Activated CD4-positive, alpha-beta T cell treated with anti-CD3 and anti-CD28 coated beads for 36 hours (primary cell): ENCODE measurements at regions of chr10 and their contacts with region 1.

Region 1: DNA sequence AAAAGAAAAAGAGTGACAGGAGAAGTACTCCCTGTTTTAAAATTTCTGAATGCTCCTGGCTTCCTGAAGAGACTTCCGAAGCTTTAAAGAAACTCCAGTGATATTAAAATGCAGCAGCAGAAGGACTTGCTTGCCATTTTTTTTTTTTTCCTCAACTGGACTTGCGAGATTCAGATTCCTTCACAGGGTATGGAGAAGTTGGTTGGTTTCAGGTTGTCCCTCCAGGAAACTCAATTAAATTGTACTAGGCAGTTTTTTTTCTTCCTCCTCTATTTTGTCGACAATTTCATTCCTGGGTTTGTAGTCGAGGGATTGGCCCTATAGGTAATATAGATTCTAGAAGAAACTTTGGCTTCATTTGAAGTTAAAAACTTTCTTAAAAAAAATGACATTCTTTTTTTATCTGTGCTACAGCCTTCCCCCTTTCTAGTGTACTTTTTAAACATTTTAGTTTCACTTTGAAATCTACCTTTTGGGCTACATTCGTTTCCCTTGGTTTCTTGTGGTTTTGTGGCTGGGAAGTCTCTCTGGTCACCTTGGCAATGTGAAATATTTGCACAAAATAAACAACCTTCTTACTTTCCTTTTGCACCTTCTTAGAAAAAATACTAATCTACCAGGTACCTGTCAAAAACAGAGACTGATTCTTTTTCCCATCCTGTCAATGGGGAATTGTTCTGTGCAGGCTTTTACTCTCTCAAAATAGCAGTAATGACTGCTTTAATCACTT is 350.1 kb downstream of the GATA3 start:
- DNase-seq: peak; percentile 49
- ATAC-seq: peak; percentile 10
- H3K4me3 Mint-ChIP-seq: peak overlapping the region; percentile 55
- H3K27ac Mint-ChIP-seq: peak overlapping the region; percentile 73
- H3K4me1 Mint-ChIP-seq: peaks cover 69% of the 10 kb centered on the region
- H3K27me3 Mint-ChIP-seq: no peaks in the 10 kb centered on the region

Region 2: DNA sequence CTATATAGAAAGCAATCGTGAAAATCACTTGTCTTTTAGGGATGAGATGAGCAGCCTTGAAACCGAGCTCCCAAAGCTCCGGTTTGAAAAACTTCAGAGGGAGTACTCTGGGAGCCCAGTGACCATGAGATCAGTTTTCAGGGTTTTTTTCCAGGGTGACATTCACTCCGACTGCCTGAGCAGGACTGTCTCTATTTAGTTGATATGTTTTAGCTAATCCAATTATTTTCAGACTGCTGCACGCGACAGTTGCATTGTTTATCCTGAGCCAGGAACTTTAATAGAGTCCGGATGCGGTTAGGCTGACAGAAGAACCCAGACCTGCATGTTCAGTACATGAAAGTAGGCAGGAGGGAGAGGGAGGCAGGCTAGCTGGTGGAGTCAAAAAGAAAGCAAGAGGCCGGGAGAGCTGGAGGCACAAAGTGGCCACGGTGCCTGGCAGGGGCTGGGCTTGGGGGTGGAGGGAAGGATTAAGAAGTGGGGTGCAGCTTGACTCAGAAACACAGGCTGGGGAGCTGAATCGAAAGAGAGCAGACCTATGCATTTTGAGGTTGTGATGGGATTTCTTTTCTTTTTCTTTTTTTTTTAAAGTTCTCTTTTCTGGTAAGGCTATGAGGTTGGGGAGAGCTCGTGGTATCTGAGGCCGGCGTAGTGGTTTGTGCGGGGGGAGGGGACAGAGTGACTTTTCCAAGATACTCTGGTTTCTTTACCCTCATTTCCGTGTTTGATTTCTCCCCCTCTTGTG is 344.4 kb before region 1 on chr10:
- CTCF ChIA-PET with region 1: interaction called, 3 read pairs
- POLR2A ChIA-PET with region 1: no interaction called
- intact Hi-C with region 1: loop called (anchors 2 kb)
- DNase-seq: peak; percentile 83
- ATAC-seq: peak; percentile 55
- H3K4me3 Mint-ChIP-seq: peak overlapping the region; percentile 96
- H3K27ac Mint-ChIP-seq: peak overlapping the region; percentile 81
- H3K4me1 Mint-ChIP-seq: peaks cover 77% of the 10 kb centered on the region
- H3K27me3 Mint-ChIP-seq: no peaks in the 10 kb centered on the region

Region 3: DNA sequence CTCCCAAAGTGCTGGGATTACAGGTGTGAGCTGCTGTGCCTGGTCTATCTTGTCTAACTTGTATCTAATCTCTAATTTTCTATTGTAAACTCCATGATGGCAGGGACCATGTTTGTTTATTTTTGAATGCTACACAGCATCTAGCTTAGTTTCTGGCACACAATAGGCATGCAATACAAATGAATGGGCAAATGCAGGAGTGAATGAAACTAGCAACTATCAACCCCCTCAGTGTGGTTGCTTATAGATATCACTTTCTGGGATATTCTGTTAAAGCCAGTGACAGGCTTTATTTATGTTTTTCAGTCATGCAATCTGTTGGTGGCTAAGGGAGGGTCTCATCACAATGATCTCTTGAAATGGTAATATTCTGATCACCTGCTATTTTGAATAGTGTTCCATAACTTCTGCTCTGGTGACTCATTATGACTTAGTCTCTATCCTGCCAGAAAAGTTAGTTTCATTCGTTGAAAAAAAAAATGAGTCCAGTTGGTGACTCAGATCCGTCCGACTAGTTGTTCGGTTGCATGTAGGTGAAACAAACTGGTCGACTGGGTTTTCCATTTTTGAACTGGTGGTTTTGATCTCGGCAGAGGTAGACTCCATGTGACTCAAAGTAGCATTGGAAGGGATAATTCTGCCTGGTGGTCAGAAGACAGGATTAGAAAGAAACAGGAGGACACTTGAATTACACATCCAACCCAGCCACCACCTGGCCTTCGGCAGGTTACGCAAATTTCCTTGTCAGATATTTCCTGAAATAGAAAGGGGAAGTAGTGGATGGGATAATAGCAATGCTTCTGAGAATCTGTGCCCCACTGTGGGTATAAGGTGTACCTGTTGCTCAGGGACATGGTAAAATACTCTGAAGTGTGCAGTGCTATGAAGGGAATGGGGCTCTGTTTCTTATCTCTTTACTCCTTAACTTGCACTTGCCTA is 273.3 kb before region 1 on chr10:
- CTCF ChIA-PET with region 1: no interaction called
- POLR2A ChIA-PET with region 1: no interaction called
- intact Hi-C with region 1: loop called (anchors 2 to 5 kb)
- DNase-seq: peak; percentile 56
- ATAC-seq: peak; percentile 82
- H3K4me3 Mint-ChIP-seq: no peak overlapping the region
- H3K27ac Mint-ChIP-seq: peak overlapping the region; percentile 51
- H3K4me1 Mint-ChIP-seq: peaks cover 40% of the 10 kb centered on the region
- H3K27me3 Mint-ChIP-seq: peaks cover 7% of the 10 kb centered on the region

Region 4: DNA sequence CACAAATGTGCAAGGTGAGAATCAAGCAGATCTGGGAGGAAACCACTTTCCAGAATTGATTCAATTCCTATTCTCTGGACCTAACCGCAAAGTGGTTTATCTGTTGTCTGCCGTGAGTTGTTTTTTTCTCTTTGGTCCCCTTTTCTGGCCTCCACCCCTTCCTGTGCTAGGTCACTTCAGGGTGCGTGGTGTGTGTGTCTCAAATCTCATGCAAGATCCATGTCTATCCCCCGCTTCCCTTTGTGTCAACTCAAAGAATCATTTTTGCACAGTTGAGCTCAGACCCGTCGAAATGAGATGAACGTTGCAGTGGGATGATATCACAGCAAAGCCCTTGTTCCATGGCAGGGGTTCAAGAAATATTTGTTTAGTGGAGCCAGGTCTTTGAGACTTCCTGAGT is 165.6 kb before region 1 on chr10:
- CTCF ChIA-PET with region 1: no interaction called
- POLR2A ChIA-PET with region 1: interaction called, 4 read pairs
- intact Hi-C with region 1: loop called in 1 of 2 experiments (anchors 5 kb)
- DNase-seq: peak; percentile 58
- ATAC-seq: peak; percentile 54
- H3K4me3 Mint-ChIP-seq: no peak overlapping the region
- H3K27ac Mint-ChIP-seq: peak overlapping the region; percentile 1
- H3K4me1 Mint-ChIP-seq: peaks cover 51% of the 10 kb centered on the region
- H3K27me3 Mint-ChIP-seq: no peaks in the 10 kb centered on the region

Region 5: GRCh38 chr10:8315619-8316021 is 88.9 kb before region 1 on chr10:
- CTCF ChIA-PET with region 1: interaction called, 3 read pairs
- POLR2A ChIA-PET with region 1: interaction called, 3 read pairs
- intact Hi-C with region 1: loop called in 1 of 2 experiments (anchors 5 kb)
- DNase-seq: peak; percentile 44
- ATAC-seq: peak; percentile 84
- H3K4me3 Mint-ChIP-seq: no peak overlapping the region
- H3K27ac Mint-ChIP-seq: peak overlapping the region; percentile 78
- H3K4me1 Mint-ChIP-seq: peaks cover 56% of the 10 kb centered on the region
- H3K27me3 Mint-ChIP-seq: peaks cover 2% of the 10 kb centered on the region

Region 6: DNA sequence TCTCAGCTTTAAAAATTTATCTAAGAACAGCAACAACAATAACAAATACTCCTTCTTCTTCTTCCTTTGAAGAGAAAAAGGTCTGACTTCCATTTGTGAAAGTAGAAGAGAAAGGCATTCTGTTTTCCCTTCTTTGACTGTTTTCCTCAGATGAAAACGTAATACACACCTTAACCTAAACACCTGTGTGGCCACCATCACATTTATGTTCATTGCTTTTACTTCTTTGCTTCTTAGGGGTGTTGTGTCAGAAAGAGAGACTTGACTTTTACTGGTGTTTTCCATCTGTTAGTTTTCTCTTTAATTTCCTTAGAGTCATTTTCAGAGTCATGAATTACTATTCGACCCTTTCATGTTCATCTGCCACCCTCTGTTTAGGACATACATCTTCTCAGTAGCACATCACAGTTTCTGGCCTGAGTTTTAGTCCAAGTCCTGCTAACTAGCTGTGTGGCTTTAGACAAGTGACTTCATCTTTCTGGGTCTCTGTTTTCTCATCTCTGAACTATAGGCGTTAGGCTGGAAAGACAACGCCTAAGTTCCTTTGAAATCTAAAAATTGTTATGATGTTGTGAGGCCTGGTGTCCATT is 66.3 kb before region 1 on chr10:
- CTCF ChIA-PET with region 1: no interaction called
- POLR2A ChIA-PET with region 1: no interaction called
- intact Hi-C with region 1: loop called (anchors 2 to 5 kb)
- DNase-seq: peak; percentile 27
- ATAC-seq: peak; percentile 96
- H3K4me3 Mint-ChIP-seq: peak overlapping the region; percentile 14
- H3K27ac Mint-ChIP-seq: peak overlapping the region; percentile 86
- H3K4me1 Mint-ChIP-seq: peaks cover 31% of the 10 kb centered on the region
- H3K27me3 Mint-ChIP-seq: no peaks in the 10 kb centered on the region

Region 7: GRCh38 chr10:9024210-9024609 is 619.7 kb after region 1 on chr10:
- CTCF ChIA-PET with region 1: no interaction called
- POLR2A ChIA-PET with region 1: no interaction called
- intact Hi-C with region 1: loop called in 1 of 2 experiments (anchors 2 kb)
- DNase-seq: no peak
- ATAC-seq: peak; percentile 72
- H3K4me3 Mint-ChIP-seq: no peak overlapping the region
- H3K27ac Mint-ChIP-seq: peak overlapping the region; percentile 81
- H3K4me1 Mint-ChIP-seq: peaks cover 47% of the 10 kb centered on the region
- H3K27me3 Mint-ChIP-seq: peaks cover 12% of the 10 kb centered on the region